Caco-2 (cell line): ENCODE measurements at regions of chr11 and their contacts with region 1.

Region 1: DNA sequence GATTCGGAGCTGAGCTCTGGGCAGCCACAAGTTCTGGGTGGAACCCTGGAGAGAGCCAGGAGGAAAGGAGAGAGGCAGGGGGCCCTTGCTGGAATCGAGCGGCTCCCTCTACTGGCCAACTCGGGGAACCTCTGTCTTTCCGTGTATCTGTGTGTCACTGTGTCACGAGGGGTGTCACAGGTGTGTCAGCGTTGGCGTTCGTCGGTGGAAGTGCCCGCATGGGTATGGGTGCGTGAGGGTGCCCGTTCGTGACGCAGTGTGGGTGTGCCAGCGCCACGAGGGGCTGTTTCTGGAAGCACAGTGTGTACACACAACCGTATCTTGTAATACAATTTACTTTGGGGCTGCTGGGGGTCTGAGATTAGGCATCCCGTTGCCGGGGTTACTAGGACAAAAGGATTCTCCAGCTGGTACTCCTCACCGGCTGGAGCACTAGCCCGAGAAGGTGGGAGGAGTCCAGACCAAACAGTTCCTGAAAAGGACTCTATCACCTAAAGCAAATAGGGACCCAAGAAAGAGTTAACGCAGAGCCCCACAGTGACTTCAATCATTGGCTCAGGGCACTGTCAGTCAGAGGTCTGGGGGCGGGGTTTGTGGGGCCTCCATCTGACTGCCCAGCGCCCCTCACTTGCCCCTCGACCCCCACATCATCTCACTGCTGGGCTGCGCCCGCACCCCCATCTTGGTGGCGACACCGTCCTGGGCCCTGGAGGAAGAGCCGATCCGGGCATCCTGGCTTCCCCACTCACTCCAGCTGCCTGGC is 2.6 kb upstream of the BCL9L start:
- DNase-seq: peak; percentile 97 to 99
- H3K4me3 ChIP-seq: peak overlapping the region; percentile 64
- H3K4me3 Mint-ChIP-seq: peak overlapping the region; percentile 79
- H3K27ac Mint-ChIP-seq: peak overlapping the region; percentile 84
- H3K4me1 ChIP-seq: peaks cover 27% of the 10 kb centered on the region
- H3K4me1 Mint-ChIP-seq: peaks cover 28% of the 10 kb centered on the region
- H3K27me3 ChIP-seq: no peaks in the 10 kb centered on the region
- H3K27me3 Mint-ChIP-seq: no peaks in the 10 kb centered on the region
- CTCF ChIP-seq: peak; percentile 98

Region 2: DNA sequence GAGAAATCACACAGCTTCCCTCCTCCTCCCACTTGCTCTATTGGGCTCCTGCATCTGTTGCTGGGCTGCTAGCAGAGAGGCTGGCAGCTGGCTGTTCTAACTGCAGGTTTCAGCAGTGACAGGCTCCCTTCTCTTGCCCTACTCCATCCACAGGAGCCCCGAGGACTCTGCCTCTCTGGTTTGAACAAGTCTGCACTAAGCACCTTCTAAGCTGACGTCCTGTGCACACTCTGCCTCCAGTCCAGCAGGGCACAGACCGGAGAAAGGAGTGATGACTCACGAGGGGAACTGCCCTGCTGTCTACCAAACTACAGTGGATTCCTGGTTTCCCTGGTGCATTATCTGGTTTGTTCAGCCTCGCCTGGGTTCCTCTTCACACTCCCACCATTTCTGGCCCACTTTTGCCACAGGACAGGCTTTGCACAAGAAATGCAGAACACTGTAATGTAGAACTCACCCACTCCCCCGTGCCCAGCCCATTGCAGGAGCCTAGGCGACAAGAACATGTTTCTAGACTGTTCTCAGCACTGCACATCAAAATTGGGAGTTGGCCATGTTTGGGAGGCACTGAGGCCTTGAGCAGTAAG is 916.1 kb before region 1 on chr11:
- CTCF ChIA-PET with region 1: no interaction called
- POLR2A ChIA-PET with region 1: no interaction called
- intact Hi-C with region 1: no loop called
- DNase-seq: no peak
- H3K4me3 ChIP-seq: no peak overlapping the region
- H3K4me3 Mint-ChIP-seq: no peak overlapping the region
- H3K27ac Mint-ChIP-seq: no peak overlapping the region
- H3K4me1 ChIP-seq: peaks cover 29% of the 10 kb centered on the region
- H3K4me1 Mint-ChIP-seq: peaks cover 20% of the 10 kb centered on the region
- H3K27me3 ChIP-seq: no peaks in the 10 kb centered on the region
- H3K27me3 Mint-ChIP-seq: no peaks in the 10 kb centered on the region
- CTCF ChIP-seq: no peak

Region 3: GRCh38 chr11:118659314-118659952 is 268.9 kb before region 1 on chr11:
- CTCF ChIA-PET with region 1: no interaction called
- POLR2A ChIA-PET with region 1: no interaction called
- intact Hi-C with region 1: loop called (anchors 1 kb)
- DNase-seq: peak; percentile 97 to 99
- H3K4me3 ChIP-seq: no peak overlapping the region
- H3K4me3 Mint-ChIP-seq: no peak overlapping the region
- H3K27ac Mint-ChIP-seq: peak overlapping the region; percentile 43
- H3K4me1 ChIP-seq: peaks cover 37% of the 10 kb centered on the region
- H3K4me1 Mint-ChIP-seq: peaks cover 11% of the 10 kb centered on the region
- H3K27me3 ChIP-seq: no peaks in the 10 kb centered on the region
- H3K27me3 Mint-ChIP-seq: no peaks in the 10 kb centered on the region
- CTCF ChIP-seq: peak; percentile 100

Region 4: GRCh38 chr11:118791111-118791965 is 137.0 kb before region 1 on chr11 and contains the start of gene DDX6:
- CTCF ChIA-PET with region 1: interaction called, 13 read pairs
- POLR2A ChIA-PET with region 1: interaction called, 11 read pairs
- intact Hi-C with region 1: loop called (anchors 1 kb)
- DNase-seq: peak; percentile 96 to 98
- H3K4me3 ChIP-seq: peak within 1 kb of the TSS; percentile 63
- H3K4me3 Mint-ChIP-seq: peak within 1 kb of the TSS; percentile 93
- H3K27ac Mint-ChIP-seq: peak within 1 kb of the TSS; percentile 90
- H3K4me1 ChIP-seq: peaks cover 23% of the 10 kb centered on the region
- H3K4me1 Mint-ChIP-seq: peaks cover 23% of the 10 kb centered on the region
- H3K27me3 ChIP-seq: no peaks in the 10 kb centered on the region
- H3K27me3 Mint-ChIP-seq: no peaks in the 10 kb centered on the region
- CTCF ChIP-seq: peak in 1 of 2 experiments; percentile 76
- total RNA-seq, gene DDX6: 131 and 135 TPM in 2 replicates

Region 5: DNA sequence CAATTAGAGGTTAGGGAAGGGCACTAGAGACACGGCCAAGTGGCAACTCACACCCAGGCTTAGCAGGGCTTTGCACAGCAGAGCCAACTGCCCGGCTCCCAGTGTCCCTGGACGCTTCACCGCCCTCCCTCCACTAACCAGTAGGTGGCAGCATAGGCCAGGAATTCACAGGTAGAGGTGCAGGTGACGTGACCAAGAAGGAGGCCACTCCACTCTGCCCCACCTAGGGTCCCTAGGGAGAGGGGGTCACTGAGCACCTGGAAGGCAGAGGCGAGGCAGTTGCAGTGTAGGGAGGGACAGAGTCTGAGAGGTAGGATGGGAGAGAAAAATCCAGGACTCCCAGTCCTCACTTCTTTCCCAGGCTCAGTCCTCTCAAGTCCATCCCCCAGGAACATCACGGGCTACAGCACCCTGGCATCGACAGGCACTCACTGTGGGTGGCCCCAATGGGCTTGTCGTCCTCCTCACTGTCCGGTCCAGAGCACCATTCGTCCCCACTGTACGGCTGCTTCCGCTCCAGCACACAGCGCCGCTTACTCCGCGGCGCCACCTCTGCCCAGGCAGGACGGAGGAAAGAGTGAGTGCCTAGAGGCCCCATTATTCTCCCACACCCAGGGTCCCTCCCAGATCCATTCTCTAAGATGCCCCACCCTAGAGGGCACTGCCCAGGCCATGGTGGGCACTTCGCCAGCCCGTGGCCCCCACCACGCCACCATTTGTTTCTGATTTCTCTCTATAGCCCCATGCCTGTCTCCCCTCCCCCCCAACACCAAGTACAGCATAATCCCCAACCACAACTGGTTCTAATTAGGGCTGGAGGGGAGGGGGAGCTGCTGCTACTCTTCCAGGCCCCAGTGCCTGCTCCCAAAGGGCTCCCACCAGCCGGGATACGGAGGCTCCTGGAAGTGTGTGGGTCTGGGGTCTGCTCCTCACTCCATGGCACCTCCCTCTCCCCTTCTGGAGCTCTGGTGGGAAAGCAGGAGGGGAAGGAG is 20.9 kb before region 1 on chr11:
- CTCF ChIA-PET with region 1: interaction called, 170 read pairs
- POLR2A ChIA-PET with region 1: interaction called, 171 read pairs
- intact Hi-C with region 1: loop called (anchors 1 kb)
- DNase-seq: peak; percentile 94 to 98
- H3K4me3 ChIP-seq: no peak overlapping the region
- H3K4me3 Mint-ChIP-seq: peak overlapping the region; percentile 45
- H3K27ac Mint-ChIP-seq: peak overlapping the region; percentile 96
- H3K4me1 ChIP-seq: peaks cover 45% of the 10 kb centered on the region
- H3K4me1 Mint-ChIP-seq: peaks cover 35% of the 10 kb centered on the region
- H3K27me3 ChIP-seq: no peaks in the 10 kb centered on the region
- H3K27me3 Mint-ChIP-seq: no peaks in the 10 kb centered on the region
- CTCF ChIP-seq: peak; percentile 96 to 99

Region 6: DNA sequence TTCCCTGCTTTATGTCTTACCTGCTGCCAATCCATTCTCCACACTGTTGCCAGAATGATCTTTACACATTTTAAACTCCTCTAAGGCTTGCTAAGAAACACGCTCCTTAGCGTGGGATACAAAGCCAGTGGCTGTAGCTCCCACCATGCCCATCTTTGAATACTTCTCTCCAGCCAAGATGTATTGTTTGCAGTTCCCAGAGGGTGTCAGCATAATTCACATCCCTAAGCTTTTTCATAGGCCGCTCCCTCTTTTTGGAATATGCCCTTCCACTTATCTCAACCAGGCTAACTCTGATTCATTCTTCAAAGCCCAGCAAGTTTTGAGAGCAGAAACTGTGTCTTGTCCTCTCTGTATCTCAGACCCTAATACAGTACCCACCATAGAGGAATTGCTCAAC is 19.7 kb after region 1 on chr11:
- CTCF ChIA-PET with region 1: interaction called, 5 read pairs
- POLR2A ChIA-PET with region 1: interaction called, 6 read pairs
- intact Hi-C with region 1: loop called (anchors 1 kb)
- DNase-seq: no peak
- H3K4me3 ChIP-seq: no peak overlapping the region
- H3K4me3 Mint-ChIP-seq: no peak overlapping the region
- H3K27ac Mint-ChIP-seq: no peak overlapping the region
- H3K4me1 ChIP-seq: no peaks in the 10 kb centered on the region
- H3K4me1 Mint-ChIP-seq: peaks cover 4% of the 10 kb centered on the region
- H3K27me3 ChIP-seq: no peaks in the 10 kb centered on the region; the same call in 1 of the 2 replicates
- H3K27me3 Mint-ChIP-seq: peaks cover 13% of the 10 kb centered on the region
- CTCF ChIP-seq: no peak

Region 7: DNA sequence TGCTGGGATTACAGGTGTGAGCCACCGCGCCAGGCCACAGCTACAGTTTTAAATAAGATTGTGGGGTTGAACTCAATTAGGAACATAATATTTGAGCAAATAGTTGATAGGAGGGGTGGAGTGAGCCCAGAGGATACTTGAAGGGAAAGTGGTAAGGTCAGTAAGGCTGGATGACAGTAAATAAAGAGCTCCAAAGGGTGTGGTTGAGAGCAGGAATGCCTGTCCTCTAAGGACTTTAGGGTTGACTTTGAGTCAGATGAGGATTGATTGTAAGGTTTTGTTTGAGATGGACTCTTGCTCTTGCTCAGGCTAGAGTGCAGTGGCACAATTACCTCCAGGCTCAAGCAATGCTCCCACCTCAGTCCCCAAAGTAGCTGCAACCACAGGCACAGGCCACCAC is 45.7 kb after region 1 on chr11:
- CTCF ChIA-PET with region 1: no interaction called
- POLR2A ChIA-PET with region 1: interaction called, 13 read pairs
- intact Hi-C with region 1: no loop called
- DNase-seq: no peak
- H3K4me3 ChIP-seq: no peak overlapping the region
- H3K4me3 Mint-ChIP-seq: no peak overlapping the region
- H3K27ac Mint-ChIP-seq: no peak overlapping the region
- H3K4me1 ChIP-seq: peaks cover 6% of the 10 kb centered on the region
- H3K4me1 Mint-ChIP-seq: peaks cover 16% of the 10 kb centered on the region
- H3K27me3 ChIP-seq: no peaks in the 10 kb centered on the region
- H3K27me3 Mint-ChIP-seq: no peaks in the 10 kb centered on the region
- CTCF ChIP-seq: no peak